Activated CD4-positive, alpha-beta T cell treated with anti-CD3 and anti-CD28 coated beads, Interleukin-2, amount 10 ng/mL, durations not matched to agents 7 days and 5 days (primary cell): ENCODE measurements at regions of chr9 and their contacts with region 1.

Region 1: GRCh38 chr9:12538842-12539579 is 154.2 kb upstream of the TYRP1 start:
- DNase-seq: no peak
- H3K4me3 Mint-ChIP-seq: no peak overlapping the region
- H3K27ac Mint-ChIP-seq: no peak overlapping the region
- H3K4me1 Mint-ChIP-seq: no peaks in the 10 kb centered on the region
- H3K27me3 Mint-ChIP-seq: no peaks in the 10 kb centered on the region

Region 2: DNA sequence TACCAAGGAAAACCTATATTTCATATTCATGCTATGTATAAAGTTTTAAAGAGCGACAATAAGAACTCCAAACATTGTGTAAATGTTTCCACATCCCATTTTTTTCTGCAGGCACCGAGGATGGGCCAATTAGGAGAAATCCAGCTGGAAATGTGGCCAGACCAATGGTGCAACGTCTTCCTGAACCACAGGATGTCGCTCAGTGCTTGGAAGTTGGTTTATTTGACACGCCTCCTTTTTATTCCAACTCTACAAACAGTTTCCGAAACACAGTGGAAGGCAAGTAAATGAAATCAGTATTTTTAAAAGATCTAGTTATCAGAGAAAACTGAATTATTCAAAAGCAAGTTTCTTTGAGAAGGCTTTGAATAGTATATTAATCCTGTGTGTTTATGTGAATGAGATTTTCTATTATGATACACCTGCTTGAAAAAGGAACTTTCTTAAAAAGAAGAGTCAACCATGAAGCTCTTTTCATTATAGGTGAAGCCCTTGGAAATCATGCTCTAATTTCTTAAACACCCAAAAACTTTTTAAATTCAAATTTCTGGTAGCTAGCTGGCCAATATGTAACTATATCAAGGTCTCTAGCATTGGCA is 163.2 kb after region 1 on chr9:
- CTCF ChIA-PET with region 1: no interaction called
- POLR2A ChIA-PET with region 1: no interaction called
- DNase-seq: no peak
- H3K4me3 Mint-ChIP-seq: no peak overlapping the region
- H3K27ac Mint-ChIP-seq: no peak overlapping the region
- H3K4me1 Mint-ChIP-seq: no peaks in the 10 kb centered on the region
- H3K27me3 Mint-ChIP-seq: no peaks in the 10 kb centered on the region

Region 3: DNA sequence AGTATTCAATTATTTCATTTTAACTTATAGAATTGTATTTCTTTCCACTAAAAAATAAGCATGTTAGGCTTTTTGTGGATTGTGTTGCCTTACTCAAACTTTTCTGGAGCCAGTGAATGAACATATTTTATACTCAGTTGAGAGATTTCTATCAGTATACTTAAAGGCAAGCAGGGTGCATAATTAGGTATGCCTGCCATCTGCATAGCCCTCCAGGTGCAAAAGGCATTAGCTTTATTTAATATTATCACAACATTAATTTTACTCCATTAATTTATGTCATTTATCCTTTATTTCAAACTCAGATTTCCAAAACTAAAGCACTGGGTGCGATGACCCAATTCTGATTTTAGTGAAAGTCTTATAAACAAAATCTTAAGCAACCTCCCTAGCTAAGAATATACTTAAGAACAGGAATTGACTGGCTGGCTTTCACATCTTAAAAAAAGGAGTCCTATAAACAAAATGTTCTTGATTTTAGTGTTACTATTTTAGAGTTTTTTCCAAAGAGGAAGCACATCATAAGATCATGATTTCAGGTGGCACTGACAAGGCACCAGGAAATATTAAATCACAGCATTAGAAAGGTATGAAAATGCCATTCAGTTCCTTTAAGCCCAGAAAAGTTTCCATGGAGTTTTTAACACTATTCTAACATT is 562.0 kb after region 1 on chr9:
- CTCF ChIA-PET with region 1: no interaction called
- POLR2A ChIA-PET with region 1: interaction called, 11 read pairs
- DNase-seq: no peak
- H3K4me3 Mint-ChIP-seq: no peak overlapping the region
- H3K27ac Mint-ChIP-seq: no peak overlapping the region
- H3K4me1 Mint-ChIP-seq: no peaks in the 10 kb centered on the region
- H3K27me3 Mint-ChIP-seq: no peaks in the 10 kb centered on the region